IMR-90 (cell line): ENCODE measurements at regions of chr7 and their contacts with region 1.

Region 1: DNA sequence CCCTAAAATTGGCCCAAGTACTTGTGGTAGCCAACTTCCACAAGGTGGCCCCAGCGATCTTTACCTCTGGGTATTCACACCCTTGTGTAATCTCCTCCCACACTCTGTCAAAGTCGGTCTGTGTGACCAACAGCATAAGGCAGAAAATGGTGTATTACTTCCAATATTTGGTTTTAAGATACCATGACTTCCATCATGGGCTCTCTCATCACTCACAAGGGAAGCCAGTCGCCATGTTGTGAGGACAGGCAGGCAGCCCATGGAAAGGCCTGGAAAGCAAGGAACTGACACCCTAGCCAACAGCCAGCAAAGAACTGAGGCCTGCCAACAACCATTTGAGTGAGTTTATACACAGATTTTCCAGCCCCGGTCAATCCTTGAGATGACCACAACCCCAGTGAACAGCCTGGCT is 91.0 kb upstream of the KMT2E start:
- DNase-seq: peak; percentile 88
- ATAC-seq: peak; percentile 86
- H3K4me3 ChIP-seq: no peak overlapping the region
- H3K27ac ChIP-seq: no peak overlapping the region
- H3K4me1 ChIP-seq: peaks cover 10% of the 10 kb centered on the region; the same call in 1 of the 2 replicates
- H3K27me3 ChIP-seq: no peaks in the 10 kb centered on the region; the same call in 1 of the 2 replicates
- CTCF ChIP-seq: peak; percentile 83
- POLR2A ChIP-seq: 0 out of 2 replicates have a peak, but pooled peaks have one; percentile 35
- RAD21 ChIP-seq: peak; percentile 92

Region 2: GRCh38 chr7:104272767-104273384 is 650.1 kb before region 1 on chr7:
- CTCF ChIA-PET with region 1: no interaction called
- POLR2A ChIA-PET with region 1: no interaction called
- dilution Hi-C with region 1: no loop called
- in situ Hi-C with region 1: no loop called
- intact Hi-C with region 1: loop called (anchors 2 kb)
- DNase-seq: peak; percentile 57
- ATAC-seq: peak; percentile 83
- H3K4me3 ChIP-seq: no peak overlapping the region
- H3K27ac ChIP-seq: no peak overlapping the region
- H3K4me1 ChIP-seq: no peaks in the 10 kb centered on the region
- H3K27me3 ChIP-seq: no peaks in the 10 kb centered on the region
- CTCF ChIP-seq: peak; percentile 56
- POLR2A ChIP-seq: no peak
- RAD21 ChIP-seq: peak; percentile 51

Region 3: DNA sequence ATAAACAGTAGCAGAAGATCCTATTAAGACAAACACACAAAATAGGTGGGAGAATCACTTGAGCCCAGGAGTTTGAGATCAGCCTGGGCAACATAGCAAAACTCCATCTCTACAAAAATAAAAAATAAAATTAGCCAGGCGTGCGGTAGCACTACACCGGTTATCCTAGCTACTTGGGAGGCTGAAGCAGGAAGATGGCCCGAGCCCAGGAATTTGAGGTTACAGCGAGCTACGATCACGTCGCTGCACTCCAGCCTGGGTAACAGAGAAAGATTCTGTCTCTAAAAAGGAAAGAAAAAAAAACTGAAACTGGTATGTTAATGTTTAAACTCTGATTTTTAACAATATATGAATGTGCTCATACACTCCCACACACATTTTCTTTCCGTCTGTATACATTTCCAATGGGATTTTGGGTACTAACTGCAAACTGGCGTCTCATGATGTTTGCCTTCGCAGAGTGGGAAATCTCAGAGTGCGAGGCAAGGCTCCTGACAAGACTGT is 49.6 kb before region 1 on chr7:
- CTCF ChIA-PET with region 1: no interaction called
- POLR2A ChIA-PET with region 1: no interaction called
- dilution Hi-C with region 1: no loop called
- in situ Hi-C with region 1: no loop called
- intact Hi-C with region 1: no loop called
- DNase-seq: no peak
- ATAC-seq: peak; percentile 70
- H3K4me3 ChIP-seq: no peak overlapping the region
- H3K27ac ChIP-seq: no peak overlapping the region
- H3K4me1 ChIP-seq: peaks cover 3% of the 10 kb centered on the region; the same call in 1 of the 2 replicates
- H3K27me3 ChIP-seq: peaks cover 11% of the 10 kb centered on the region
- CTCF ChIP-seq: no peak
- POLR2A ChIP-seq: no peak
- RAD21 ChIP-seq: no peak

Region 4: DNA sequence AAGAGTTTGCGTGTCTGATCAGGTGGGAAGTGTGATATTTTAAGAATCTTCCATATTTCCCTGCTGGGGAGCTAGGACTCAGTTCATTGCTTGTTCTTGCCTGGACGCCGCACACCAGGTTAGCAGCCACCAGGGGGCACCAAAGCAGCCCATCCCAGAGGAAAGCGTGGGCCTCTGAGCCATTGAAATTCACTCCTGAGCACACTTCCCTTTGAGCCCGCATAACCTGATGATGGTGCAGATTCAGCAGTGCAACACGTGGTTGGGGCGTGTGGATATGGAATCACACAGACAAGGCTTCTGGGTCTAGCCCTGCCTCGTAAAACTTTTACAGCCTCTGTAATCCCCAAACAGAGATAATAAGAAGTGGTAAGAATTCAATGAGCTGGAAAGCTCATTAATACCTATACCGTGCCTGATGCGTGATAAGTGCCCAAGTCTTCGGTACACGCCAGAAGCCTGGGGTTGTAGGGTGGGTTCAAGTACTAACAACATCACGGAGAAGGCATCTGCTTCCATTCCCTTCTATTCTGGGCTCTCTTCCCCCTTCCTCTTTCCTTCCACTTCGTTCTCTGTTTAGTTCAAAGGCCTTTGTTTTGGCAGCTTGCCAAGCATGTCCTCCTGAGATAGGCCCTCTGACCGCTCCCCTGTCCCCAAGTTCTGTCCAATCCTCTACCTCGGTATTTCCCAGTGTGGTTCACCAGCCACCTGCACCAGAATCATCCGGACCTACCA is 39.1 kb before region 1 on chr7:
- CTCF ChIA-PET with region 1: interaction called, 24 read pairs
- POLR2A ChIA-PET with region 1: no interaction called
- dilution Hi-C with region 1: no loop called
- in situ Hi-C with region 1: no loop called
- intact Hi-C with region 1: loop called (anchors 1 kb)
- DNase-seq: peak; percentile 72
- ATAC-seq: peak; percentile 100
- H3K4me3 ChIP-seq: no peak overlapping the region
- H3K27ac ChIP-seq: no peak overlapping the region
- H3K4me1 ChIP-seq: no peaks in the 10 kb centered on the region
- H3K27me3 ChIP-seq: peaks cover 11% of the 10 kb centered on the region
- CTCF ChIP-seq: peak; percentile 90
- POLR2A ChIP-seq: no peak
- RAD21 ChIP-seq: peak; percentile 68

Region 5: DNA sequence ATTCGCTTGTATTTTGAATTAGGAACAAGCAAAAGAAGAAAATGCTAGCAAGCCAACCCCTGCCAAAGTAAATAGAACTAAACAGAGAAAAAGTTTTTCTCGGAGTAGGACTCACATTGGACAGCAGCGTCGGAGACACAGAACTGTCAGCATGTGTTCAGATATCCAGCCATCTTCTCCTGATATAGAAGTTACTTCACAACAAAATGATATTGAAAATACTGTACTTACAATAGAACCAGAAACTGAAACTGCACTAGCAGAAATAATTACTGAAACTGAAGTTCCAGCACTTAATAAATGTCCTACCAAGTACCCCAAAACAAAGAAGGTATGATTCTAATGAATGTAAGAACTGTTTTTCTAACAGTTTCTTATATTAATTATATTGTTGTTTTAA is 178.8 kb after region 1 on chr7:
- CTCF ChIA-PET with region 1: interaction called, 4 read pairs
- POLR2A ChIA-PET with region 1: no interaction called
- dilution Hi-C with region 1: no loop called
- in situ Hi-C with region 1: no loop called
- intact Hi-C with region 1: loop called (anchors 5 kb)
- DNase-seq: no peak
- ATAC-seq: no peak
- H3K4me3 ChIP-seq: no peak overlapping the region
- H3K27ac ChIP-seq: no peak overlapping the region
- H3K4me1 ChIP-seq: peaks cover 8% of the 10 kb centered on the region
- H3K27me3 ChIP-seq: no peaks in the 10 kb centered on the region
- CTCF ChIP-seq: no peak
- POLR2A ChIP-seq: no peak
- RAD21 ChIP-seq: no peak

Region 6: GRCh38 chr7:105487579-105488571 is 564.9 kb after region 1 on chr7:
- CTCF ChIA-PET with region 1: interaction called, 3 read pairs
- POLR2A ChIA-PET with region 1: no interaction called
- dilution Hi-C with region 1: no loop called
- in situ Hi-C with region 1: no loop called
- intact Hi-C with region 1: loop called (anchors 1 kb)
- DNase-seq: peak; percentile 94
- ATAC-seq: peak; percentile 95
- H3K4me3 ChIP-seq: no peak overlapping the region
- H3K27ac ChIP-seq: peak overlapping the region; percentile 79
- H3K4me1 ChIP-seq: peaks cover 3% of the 10 kb centered on the region
- H3K27me3 ChIP-seq: no peaks in the 10 kb centered on the region
- CTCF ChIP-seq: peak; percentile 64
- POLR2A ChIP-seq: no peak
- RAD21 ChIP-seq: peak; percentile 81

Region 7: DNA sequence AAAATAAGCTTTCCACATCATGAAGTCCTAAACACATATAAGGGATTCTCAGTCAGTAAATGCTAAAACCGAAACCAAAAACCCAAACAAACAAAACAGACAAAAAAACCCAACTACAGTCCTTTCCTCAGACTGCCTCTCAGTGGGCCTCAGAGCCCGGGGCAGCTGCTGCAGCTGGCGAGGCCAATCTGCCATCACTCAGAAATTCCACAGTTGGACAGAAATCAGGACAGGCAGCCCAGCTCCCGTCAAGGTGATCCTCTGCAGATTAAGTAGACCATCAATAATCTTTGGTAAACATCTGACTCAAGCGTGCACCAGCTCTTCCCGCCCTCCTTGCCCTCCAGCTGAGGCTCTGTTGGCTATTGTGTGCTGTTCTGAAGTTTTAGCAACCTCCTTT is 811.2 kb after region 1 on chr7:
- CTCF ChIA-PET with region 1: no interaction called
- POLR2A ChIA-PET with region 1: no interaction called
- dilution Hi-C with region 1: no loop called
- in situ Hi-C with region 1: no loop called
- intact Hi-C with region 1: no loop called
- DNase-seq: peak; percentile 7
- ATAC-seq: peak; percentile 60
- H3K4me3 ChIP-seq: no peak overlapping the region
- H3K27ac ChIP-seq: no peak overlapping the region
- H3K4me1 ChIP-seq: peaks cover 2% of the 10 kb centered on the region; the same call in 1 of the 2 replicates
- H3K27me3 ChIP-seq: no peaks in the 10 kb centered on the region
- CTCF ChIP-seq: no peak
- POLR2A ChIP-seq: no peak
- RAD21 ChIP-seq: no peak